Stomach (tissue), 19 donors: ENCODE measurements at regions of chr10 and their contacts with region 1.

Region 1: GRCh38 chr10:50614444-50615137 is 9.2 kb downstream of the SGMS1 start:
- DNase-seq: peak; percentile 46 to 52
- H3K4me3 ChIP-seq: no peak overlapping the region
- H3K27ac ChIP-seq: no peak overlapping the region
- H3K4me1 ChIP-seq: peaks cover 22 to 70% (median 40%) of the 10 kb centered on the region in 4 donors
- H3K27me3 ChIP-seq: no peaks in the 10 kb centered on the region
- CTCF ChIP-seq: peak in 4 of 7 experiments; percentile 10 to 45 (median 29)
- EP300 ChIP-seq: no peak
- POLR2A ChIP-seq: no peak

Region 2: GRCh38 chr10:50552771-50553535 is 61.6 kb before region 1 on chr10:
- intact Hi-C with region 1: loop called (anchors 10 kb)
- DNase-seq: peak; percentile 29 to 41
- H3K4me3 ChIP-seq: no peak overlapping the region
- H3K27ac ChIP-seq: peak overlapping the region in 4 of 5 donors; percentile 1 to 16 (median 12)
- H3K4me1 ChIP-seq: peaks cover 26 to 84% (median 64%) of the 10 kb centered on the region in 4 donors
- H3K27me3 ChIP-seq: no peaks in the 10 kb centered on the region
- CTCF ChIP-seq: peak in 2 of 7 experiments; percentile 5 to 12
- EP300 ChIP-seq: no peak
- POLR2A ChIP-seq: no peak